ENCODE measurements at regions of chr1 and their contacts with region 1.

Region 1: DNA sequence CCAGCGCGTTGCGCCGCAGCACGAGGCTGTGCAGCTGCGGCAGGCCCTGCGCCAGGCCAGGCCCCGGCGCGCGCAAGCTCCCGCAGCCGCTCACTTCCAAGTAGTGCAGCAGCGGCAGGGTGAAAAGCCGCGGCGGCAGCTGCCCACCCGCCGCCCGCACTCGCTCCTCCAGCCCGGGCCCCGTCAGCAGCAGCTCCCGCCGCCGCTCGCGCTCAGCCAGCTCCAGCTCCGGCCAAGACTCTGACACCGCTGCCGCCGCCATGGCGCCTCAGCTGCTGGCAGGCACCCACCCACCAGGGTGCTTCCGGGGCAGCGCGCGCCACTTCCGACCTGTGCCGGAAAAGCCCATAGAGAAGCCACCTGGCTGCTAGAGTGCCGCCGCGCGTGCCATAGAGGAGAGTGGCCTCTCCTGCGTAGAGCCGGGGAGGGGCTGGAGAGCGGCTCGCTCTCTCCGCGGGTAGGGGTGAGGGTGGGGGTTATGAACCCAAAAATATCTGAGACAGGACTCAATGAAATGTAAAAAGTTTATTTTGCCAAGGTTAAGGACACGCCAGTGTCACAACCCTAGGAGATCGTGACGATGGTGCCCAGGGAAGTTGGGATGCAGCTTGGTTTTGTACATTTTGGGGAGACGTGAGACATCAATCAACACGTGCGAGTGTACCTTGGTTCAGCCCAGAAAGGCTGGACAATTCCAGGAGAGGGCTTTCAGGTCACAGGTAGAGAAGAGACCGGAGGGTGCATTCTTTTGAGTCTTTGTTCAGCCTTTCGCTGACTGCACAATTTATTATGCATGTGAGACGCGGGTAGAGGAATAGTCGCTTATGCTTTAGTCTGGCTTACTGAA is at the start of gene LRRC47:
- DNase-seq: peak; percentile 65 to 96
- H3K4me3 ChIP-seq: peak within 1 kb of the TSS; percentile 99
- H3K27ac ChIP-seq: peak within 1 kb of the TSS; percentile 63 to 67
- H3K4me1 ChIP-seq: peaks cover 20 to 27% of the 10 kb centered on the region in 2 donors
- H3K27me3 ChIP-seq: no peaks in the 10 kb centered on the region
- CTCF ChIP-seq: no peak
- total RNA-seq, gene LRRC47: 41.5 TPM

Region 2: GRCh38 chr1:3772027-3772714 is 24.3 kb before region 1 on chr1:
- intact Hi-C with region 1: loop called (anchors 2 kb)
- DNase-seq: peak; percentile 67 to 93
- H3K4me3 ChIP-seq: peak overlapping the region; percentile 71 to 86
- H3K27ac ChIP-seq: peak overlapping the region; percentile 52 to 91
- H3K4me1 ChIP-seq: peaks cover 0 to 8% of the 10 kb centered on the region in 2 donors
- H3K27me3 ChIP-seq: no peaks in the 10 kb centered on the region
- CTCF ChIP-seq: no peak

Region 3: GRCh38 chr1:3821004-3821403 is 24.6 kb after region 1 on chr1:
- intact Hi-C with region 1: no loop called
- DNase-seq: no peak
- H3K4me3 ChIP-seq: no peak overlapping the region
- H3K27ac ChIP-seq: no peak overlapping the region
- H3K4me1 ChIP-seq: no peaks in the 10 kb centered on the region
- H3K27me3 ChIP-seq: no peaks in the 10 kb centered on the region
- CTCF ChIP-seq: no peak

Region 4: GRCh38 chr1:3856908-3857790 is 60.7 kb after region 1 on chr1 and contains the starts of genes CEP104 and DFFB:
- intact Hi-C with region 1: loop called (anchors 5 kb)
- DNase-seq: peak; percentile 76 to 92
- H3K4me3 ChIP-seq: peak within 1 kb of the TSS; percentile 94 to 98
- H3K27ac ChIP-seq: peak within 1 kb of the TSS; percentile 79 to 80
- H3K4me1 ChIP-seq: peaks cover 6 to 15% of the 10 kb centered on the region in 2 donors
- H3K27me3 ChIP-seq: no peaks in the 10 kb centered on the region
- CTCF ChIP-seq: peak in 1 of 3 experiments; percentile 7
- total RNA-seq, gene CEP104: 93.6 TPM
- total RNA-seq, gene DFFB: 45.4 TPM

Region 5: GRCh38 chr1:3900119-3900968 is 103.9 kb after region 1 on chr1 and contains the start of gene C1orf174:
- intact Hi-C with region 1: loop called (anchors 5 kb)
- DNase-seq: peak; percentile 92 to 98
- H3K4me3 ChIP-seq: peak within 1 kb of the TSS; percentile 86 to 95
- H3K27ac ChIP-seq: peak within 1 kb of the TSS; percentile 95 to 98
- H3K4me1 ChIP-seq: peaks cover 3 to 7% of the 10 kb centered on the region in 2 donors
- H3K27me3 ChIP-seq: no peaks in the 10 kb centered on the region
- CTCF ChIP-seq: no peak
- total RNA-seq, gene C1orf174: 14.9 TPM

Measured in ascending aorta (tissue), 2 donors.